ENCODE measurements at regions of chrX and their contacts with region 1.

Region 1: GRCh38 chrX:50691820-50692219 is 122.2 kb downstream of the SHROOM4 start:
- DNase-seq: no peak
- H3K4me3 ChIP-seq: no peak overlapping the region
- H3K27ac ChIP-seq: no peak overlapping the region
- H3K4me1 ChIP-seq: no peaks in the 10 kb centered on the region
- H3K27me3 ChIP-seq: peaks cover 0 to 10% (median 0%) of the 10 kb centered on the region in 7 donors
- CTCF ChIP-seq: peak in 10 of 11 experiments; percentile 21 to 67 (median 56)
- POLR2A ChIP-seq: no peak

Region 2: DNA sequence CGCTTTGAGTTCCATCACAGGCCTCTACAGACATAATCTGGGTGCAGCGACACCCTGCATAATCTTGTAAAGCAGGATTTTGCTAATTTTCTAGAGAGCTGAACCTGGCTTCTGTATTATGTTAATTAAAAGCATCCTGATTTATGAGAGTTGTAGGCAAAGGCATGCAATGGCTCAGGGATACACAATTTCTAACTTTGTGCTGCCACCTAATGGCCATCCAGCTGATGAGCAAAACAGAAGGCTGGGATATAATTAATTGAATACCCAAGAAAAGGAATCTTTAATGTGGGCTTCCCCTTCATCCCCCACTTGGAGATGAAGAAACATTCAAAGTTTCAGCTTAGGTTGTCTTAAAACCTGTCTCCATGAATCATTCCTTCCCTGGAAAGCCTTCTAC is 296.8 kb after region 1 on chrX:
- intact Hi-C with region 1: loop called (anchors 10 kb)
- DNase-seq: no peak
- H3K4me3 ChIP-seq: no peak overlapping the region
- H3K27ac ChIP-seq: no peak overlapping the region
- H3K4me1 ChIP-seq: no peaks in the 10 kb centered on the region
- H3K27me3 ChIP-seq: peaks cover 0 to 10% (median 0%) of the 10 kb centered on the region in 7 donors
- CTCF ChIP-seq: peak in 8 of 11 experiments; percentile 5 to 51 (median 23)
- POLR2A ChIP-seq: no peak